PC-3 (cell line): ENCODE measurements at regions of chr6 and their contacts with region 1.

Region 1: DNA sequence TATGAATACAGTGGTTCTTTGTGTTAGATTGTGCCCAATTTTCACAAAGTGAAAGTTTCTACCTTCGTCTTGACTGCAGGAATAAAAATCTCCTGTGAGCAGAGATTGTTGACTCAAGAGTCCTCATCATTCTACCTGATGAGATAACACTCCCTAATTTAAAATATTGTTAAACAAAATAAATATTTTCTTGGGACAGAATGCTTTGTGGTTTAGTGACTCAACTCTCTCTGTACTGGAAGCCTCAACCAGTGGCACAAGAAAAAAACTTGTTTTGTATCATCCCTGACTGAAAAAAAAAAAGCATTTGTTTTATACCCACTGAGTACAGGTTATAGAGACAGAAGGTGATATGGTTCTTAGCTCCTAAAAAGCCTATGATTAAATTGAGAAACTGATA is 78.9 kb downstream of the CRYBG1 start:
- DNase-seq: peak; percentile 82
- ATAC-seq: peak; percentile 74
- H3K4me3 ChIP-seq: peak overlapping the region; percentile 54
- H3K27ac ChIP-seq: peak overlapping the region; percentile 47
- H3K4me1 ChIP-seq: peaks cover 41% of the 10 kb centered on the region
- H3K27me3 ChIP-seq: no peaks in the 10 kb centered on the region
- CTCF ChIP-seq: no peak

Region 2: DNA sequence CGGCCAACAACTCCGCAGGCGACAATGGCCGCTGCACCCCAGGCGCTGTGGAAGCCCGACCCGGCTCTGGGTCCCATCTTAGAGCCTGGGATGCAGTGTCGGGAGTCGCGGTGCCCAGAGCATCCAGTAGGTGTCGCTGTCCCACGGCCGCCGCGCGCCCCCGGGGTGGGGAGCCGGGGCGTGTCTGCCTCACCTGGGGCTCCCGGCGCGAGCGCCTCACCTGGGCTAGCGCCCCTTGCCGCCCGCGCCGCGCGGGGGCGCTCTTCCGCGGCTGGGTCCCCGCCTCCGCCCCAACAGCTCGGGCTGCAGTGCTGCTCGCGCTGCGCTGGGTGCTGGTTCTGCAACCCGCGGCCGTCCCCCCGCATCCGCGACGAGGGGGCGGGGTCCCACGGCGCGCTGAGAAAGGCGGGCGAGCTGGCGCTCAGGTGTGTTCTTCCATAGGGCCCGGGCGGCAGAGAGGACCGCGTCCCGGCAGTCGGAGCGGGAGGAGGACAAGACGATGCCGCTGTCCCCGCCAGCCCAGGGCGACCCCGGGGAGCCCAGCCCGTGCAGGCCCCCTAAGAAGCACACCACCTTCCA is 78.9 kb before region 1 on chr6 and contains the start of gene CRYBG1:
- CTCF ChIA-PET with region 1: interaction called, 5 read pairs
- POLR2A ChIA-PET with region 1: no interaction called
- intact Hi-C with region 1: loop called (anchors 1 kb)
- DNase-seq: peak; percentile 90
- ATAC-seq: peak; percentile 85
- H3K4me3 ChIP-seq: peak within 1 kb of the TSS; percentile 70
- H3K27ac ChIP-seq: peak within 1 kb of the TSS; percentile 42
- H3K4me1 ChIP-seq: peaks cover 20% of the 10 kb centered on the region
- H3K27me3 ChIP-seq: no peaks in the 10 kb centered on the region
- CTCF ChIP-seq: peak; percentile 82
- total RNA-seq, gene CRYBG1: 19.9 and 22.2 TPM in 2 replicates